ENCODE measurements at regions of chr1 and their contacts with region 1.

Region 1: GRCh38 chr1:224454397-224455066 is 19.9 kb upstream of the WDR26 start:
- DNase-seq: peak; percentile 85 to 91
- H3K4me3 ChIP-seq: peak overlapping the region; percentile 6
- H3K4me3 Mint-ChIP-seq: peak overlapping the region; percentile 81
- H3K27ac Mint-ChIP-seq: peak overlapping the region; percentile 96
- H3K4me1 ChIP-seq: peaks cover 32% of the 10 kb centered on the region
- H3K4me1 Mint-ChIP-seq: peaks cover 27% of the 10 kb centered on the region
- H3K27me3 ChIP-seq: no peaks in the 10 kb centered on the region
- H3K27me3 Mint-ChIP-seq: no peaks in the 10 kb centered on the region
- CTCF ChIP-seq: no peak

Region 2: GRCh38 chr1:223695941-223696340 is 758.6 kb before region 1 on chr1:
- CTCF ChIA-PET with region 1: no interaction called
- POLR2A ChIA-PET with region 1: no interaction called
- intact Hi-C with region 1: loop called (anchors 10 kb)
- DNase-seq: no peak
- H3K4me3 ChIP-seq: no peak overlapping the region
- H3K4me3 Mint-ChIP-seq: no peak overlapping the region
- H3K27ac Mint-ChIP-seq: no peak overlapping the region
- H3K4me1 ChIP-seq: peaks cover 17% of the 10 kb centered on the region
- H3K4me1 Mint-ChIP-seq: peaks cover 17% of the 10 kb centered on the region
- H3K27me3 ChIP-seq: no peaks in the 10 kb centered on the region
- H3K27me3 Mint-ChIP-seq: no peaks in the 10 kb centered on the region
- CTCF ChIP-seq: no peak

Region 3: DNA sequence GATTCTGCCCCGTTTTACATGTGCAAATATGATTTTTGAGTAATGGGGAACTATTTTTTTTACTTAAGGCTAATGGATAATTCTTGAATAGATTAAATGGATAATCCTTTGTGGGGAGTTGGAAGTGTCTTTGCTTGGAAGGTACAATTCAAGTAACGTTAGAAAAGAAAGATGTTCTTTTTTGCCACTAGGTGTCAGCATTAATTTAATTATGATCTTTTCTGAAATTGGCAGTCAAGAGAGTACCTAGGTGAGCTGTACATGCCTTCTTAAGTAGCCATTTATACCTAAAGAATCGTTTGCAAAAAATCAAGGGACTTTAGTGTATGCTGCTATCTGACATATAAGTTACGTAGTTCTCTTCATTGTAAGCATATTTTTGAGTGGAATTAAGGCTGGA is 338.4 kb before region 1 on chr1:
- CTCF ChIA-PET with region 1: interaction called, 5 read pairs
- POLR2A ChIA-PET with region 1: no interaction called
- intact Hi-C with region 1: loop called (anchors 1 kb)
- DNase-seq: peak in 1 of 2 experiments; percentile 9
- H3K4me3 ChIP-seq: no peak overlapping the region; the same call in 1 of the 2 replicates
- H3K4me3 Mint-ChIP-seq: no peak overlapping the region
- H3K27ac Mint-ChIP-seq: no peak overlapping the region
- H3K4me1 ChIP-seq: peaks cover 8% of the 10 kb centered on the region; the same call in 1 of the 2 replicates
- H3K4me1 Mint-ChIP-seq: no peaks in the 10 kb centered on the region
- H3K27me3 ChIP-seq: no peaks in the 10 kb centered on the region
- H3K27me3 Mint-ChIP-seq: no peaks in the 10 kb centered on the region
- CTCF ChIP-seq: peak; percentile 40 to 55

Region 4: DNA sequence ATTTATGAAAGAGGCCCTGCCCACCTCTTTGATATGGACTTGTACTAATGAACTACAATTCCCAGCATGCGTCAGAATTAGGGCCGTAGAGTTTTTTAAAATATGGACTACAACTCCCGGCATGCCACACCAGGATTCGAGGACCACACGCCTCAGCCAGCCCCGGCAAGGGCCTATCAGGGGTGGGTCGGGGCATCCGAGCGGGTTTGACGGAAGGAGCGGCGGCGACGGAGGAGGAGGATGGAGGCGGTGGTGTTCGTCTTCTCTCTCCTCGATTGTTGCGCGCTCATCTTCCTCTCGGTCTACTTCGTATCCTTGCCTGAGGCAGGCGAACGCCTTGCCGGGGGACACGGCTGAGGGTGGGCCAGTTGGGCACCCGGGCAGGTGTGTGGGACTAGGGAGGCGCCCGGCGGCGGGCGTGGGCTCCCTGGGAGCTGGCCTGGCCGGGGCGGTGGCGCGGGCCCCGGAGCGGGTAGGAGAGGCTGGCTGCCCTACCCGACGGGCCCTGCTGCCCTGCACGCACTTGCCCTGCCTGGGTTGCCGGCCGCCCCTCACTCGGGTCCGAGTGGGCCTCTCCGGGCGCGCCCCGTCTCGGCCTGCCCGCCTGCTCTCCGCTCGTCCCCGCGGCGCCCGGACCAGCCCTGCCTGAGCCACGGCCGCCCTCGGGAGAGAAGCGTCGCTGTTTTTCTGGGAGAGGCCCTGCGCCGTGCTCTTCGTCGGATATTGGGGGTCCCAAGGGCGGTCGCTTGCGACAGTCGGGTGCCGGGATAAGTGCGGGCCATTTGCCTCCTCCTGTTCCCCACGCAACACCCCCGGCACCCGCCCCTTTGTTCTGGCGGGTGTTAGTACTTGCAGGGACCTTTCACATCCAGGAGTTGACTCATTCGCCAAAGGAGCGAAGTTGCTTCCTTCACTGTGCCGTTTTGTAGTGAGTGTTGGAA is 97.6 kb before region 1 on chr1 and contains the start of gene CNIH4:
- CTCF ChIA-PET with region 1: no interaction called
- POLR2A ChIA-PET with region 1: no interaction called
- intact Hi-C with region 1: loop called (anchors 10 kb)
- DNase-seq: peak; percentile 92 to 93
- H3K4me3 ChIP-seq: peak within 1 kb of the TSS; percentile 94
- H3K4me3 Mint-ChIP-seq: peak within 1 kb of the TSS; percentile 86
- H3K27ac Mint-ChIP-seq: peak within 1 kb of the TSS; percentile 82
- H3K4me1 ChIP-seq: 0 out of 2 replicates have a peak, but pooled peaks cover 4% of the 10 kb centered on the region
- H3K4me1 Mint-ChIP-seq: peaks cover 18% of the 10 kb centered on the region
- H3K27me3 ChIP-seq: no peaks in the 10 kb centered on the region
- H3K27me3 Mint-ChIP-seq: no peaks in the 10 kb centered on the region
- CTCF ChIP-seq: no peak
- total RNA-seq, gene CNIH4: 84.4 and 85.6 TPM in 2 replicates

Region 5: DNA sequence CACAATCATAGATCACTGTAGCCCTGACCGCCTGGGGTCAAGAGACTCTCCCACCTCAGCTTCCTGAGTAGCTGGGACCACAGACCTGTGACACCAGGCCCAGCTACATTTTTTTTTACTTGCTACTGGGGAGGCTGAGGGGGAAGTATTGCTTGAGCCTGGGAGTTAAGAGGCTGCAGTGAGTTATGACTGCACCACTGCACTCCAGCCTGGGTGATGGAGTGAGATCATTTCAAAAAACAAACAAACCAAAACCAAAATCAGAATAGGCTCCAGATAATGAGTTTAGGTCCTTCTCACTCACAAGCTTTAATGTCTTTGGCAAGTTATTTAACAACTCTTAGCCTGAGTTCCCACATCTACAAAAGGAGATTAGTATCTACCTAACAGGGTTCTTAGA is 42.8 kb before region 1 on chr1:
- CTCF ChIA-PET with region 1: no interaction called
- POLR2A ChIA-PET with region 1: no interaction called
- intact Hi-C with region 1: loop called (anchors 10 kb)
- DNase-seq: no peak
- H3K4me3 ChIP-seq: no peak overlapping the region
- H3K4me3 Mint-ChIP-seq: no peak overlapping the region
- H3K27ac Mint-ChIP-seq: no peak overlapping the region
- H3K4me1 ChIP-seq: peaks cover 8% of the 10 kb centered on the region
- H3K4me1 Mint-ChIP-seq: peaks cover 8% of the 10 kb centered on the region
- H3K27me3 ChIP-seq: no peaks in the 10 kb centered on the region
- H3K27me3 Mint-ChIP-seq: no peaks in the 10 kb centered on the region
- CTCF ChIP-seq: no peak

Region 6: DNA sequence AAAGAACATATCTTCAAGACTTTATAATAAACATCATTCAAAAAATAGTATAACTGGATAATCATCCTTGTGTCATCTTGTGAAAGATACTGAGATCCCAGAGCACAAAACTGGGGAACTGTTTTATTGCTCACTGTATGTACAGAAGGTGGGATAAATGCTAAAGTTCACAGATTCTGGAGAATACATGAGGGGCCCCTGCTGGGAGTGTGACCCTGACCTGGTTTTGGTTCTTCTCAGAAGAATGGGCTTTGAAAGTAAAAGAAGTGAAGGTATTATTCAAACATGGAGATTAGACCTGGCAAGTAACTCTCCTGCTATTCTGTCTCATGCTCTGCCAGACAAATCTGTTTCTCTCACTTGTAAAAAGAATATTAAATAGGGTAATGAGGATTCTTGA is 34.4 kb before region 1 on chr1:
- CTCF ChIA-PET with region 1: interaction called, 10 read pairs
- POLR2A ChIA-PET with region 1: interaction called, 7 read pairs
- intact Hi-C with region 1: loop called (anchors 1 kb)
- DNase-seq: peak in 1 of 2 experiments; percentile 32
- H3K4me3 ChIP-seq: no peak overlapping the region
- H3K4me3 Mint-ChIP-seq: no peak overlapping the region
- H3K27ac Mint-ChIP-seq: no peak overlapping the region
- H3K4me1 ChIP-seq: peaks cover 14% of the 10 kb centered on the region; the same call in 1 of the 2 replicates
- H3K4me1 Mint-ChIP-seq: peaks cover 12% of the 10 kb centered on the region
- H3K27me3 ChIP-seq: no peaks in the 10 kb centered on the region
- H3K27me3 Mint-ChIP-seq: no peaks in the 10 kb centered on the region
- CTCF ChIP-seq: no peak

Region 7: GRCh38 chr1:224434691-224435317 is 19.7 kb before region 1 on chr1 and contains the start of gene WDR26:
- CTCF ChIA-PET with region 1: interaction called, 8 read pairs
- POLR2A ChIA-PET with region 1: interaction called, 6 read pairs
- intact Hi-C with region 1: loop called (anchors 1 kb)
- DNase-seq: peak; percentile 86
- H3K4me3 ChIP-seq: peak within 1 kb of the TSS; percentile 88
- H3K4me3 Mint-ChIP-seq: peak within 1 kb of the TSS; percentile 91
- H3K27ac Mint-ChIP-seq: peak within 1 kb of the TSS; percentile 94
- H3K4me1 ChIP-seq: peaks cover 34% of the 10 kb centered on the region
- H3K4me1 Mint-ChIP-seq: peaks cover 52% of the 10 kb centered on the region
- H3K27me3 ChIP-seq: no peaks in the 10 kb centered on the region
- H3K27me3 Mint-ChIP-seq: no peaks in the 10 kb centered on the region
- CTCF ChIP-seq: no peak
- total RNA-seq, gene WDR26: 58.6 and 62.9 TPM in 2 replicates

Measured in Caco-2 (cell line).